Naive thymus-derived CD4-positive, alpha-beta T cell (primary cell): ENCODE measurements at regions of chr4 and their contacts with region 1.

Region 1: GRCh38 chr4:75724066-75724866 is at the start of gene USO1:
- DNase-seq: peak; percentile 98 to 100 (median 99)
- ATAC-seq: peak; percentile 98
- H3K4me3 ChIP-seq: peak within 1 kb of the TSS; percentile 87
- H3K4me3 Mint-ChIP-seq: peak within 1 kb of the TSS; percentile 93 to 100 (median 100)
- H3K27ac ChIP-seq: peak within 1 kb of the TSS; percentile 91
- H3K27ac Mint-ChIP-seq: peak within 1 kb of the TSS; percentile 97 to 100 (median 99)
- H3K4me1 ChIP-seq: peaks cover 25 to 30% of the 10 kb centered on the region in 2 donors
- H3K4me1 Mint-ChIP-seq: peaks cover 32 to 60% (median 59%) of the 10 kb centered on the region in 7 donors
- H3K27me3 ChIP-seq: no peaks in the 10 kb centered on the region
- H3K27me3 Mint-ChIP-seq: peaks cover 0 to 4% (median 0%) of the 10 kb centered on the region in 5 donors
- total RNA-seq, gene USO1: 17.8 to 54.8 (median 35.0) TPM

Region 2: DNA sequence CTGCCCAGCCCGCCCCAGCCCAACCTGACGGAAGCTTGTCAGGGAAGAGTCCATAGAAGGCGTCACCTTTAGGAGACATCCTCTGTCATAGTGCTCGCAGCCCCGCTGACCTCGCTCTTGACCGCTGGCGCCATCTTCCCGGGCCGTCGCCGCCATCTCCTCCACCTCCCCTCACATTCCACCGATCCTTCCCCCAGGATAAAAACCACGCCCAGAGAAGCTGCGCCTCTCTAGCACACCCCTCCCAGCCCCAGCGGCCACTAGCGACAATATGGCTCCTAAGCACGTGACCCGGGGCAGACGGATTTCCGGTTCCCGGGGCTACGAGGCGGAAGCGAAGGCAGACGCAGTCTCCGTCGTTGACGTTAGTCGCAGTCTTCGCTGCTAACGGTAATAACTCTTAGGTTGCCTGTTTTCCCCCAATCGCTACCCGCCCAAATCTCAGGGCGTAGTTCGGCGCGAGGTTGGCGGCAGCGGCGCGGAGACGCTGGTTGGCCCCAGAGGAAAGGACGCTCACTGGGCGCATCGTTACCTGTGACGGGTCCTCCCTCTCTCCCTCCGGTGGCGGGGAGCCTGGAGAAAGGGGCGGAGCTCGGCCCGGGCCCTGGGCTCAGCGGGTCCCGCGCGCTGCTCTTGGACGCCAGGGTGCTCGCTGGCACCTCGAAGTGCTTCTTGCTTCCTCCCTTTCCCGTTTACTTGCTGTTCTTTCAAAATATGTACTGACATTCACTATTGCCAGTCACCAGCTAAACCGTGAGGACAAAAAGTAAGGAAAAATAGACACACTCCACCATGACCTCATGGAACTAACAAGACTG is 209.9 kb before region 1 on chr4 and contains the starts of genes RCHY1 and THAP6:
- CTCF ChIA-PET with region 1: interaction called, 5 read pairs
- POLR2A ChIA-PET with region 1: interaction called, 27 read pairs
- intact Hi-C with region 1: loop called (anchors 1 kb)
- DNase-seq: peak; percentile 82 to 95 (median 93)
- ATAC-seq: peak; percentile 92
- H3K4me3 ChIP-seq: peak within 1 kb of the TSS; percentile 79
- H3K4me3 Mint-ChIP-seq: peak within 1 kb of the TSS in 1 of 10 donors; percentile 97
- H3K27ac ChIP-seq: peak within 1 kb of the TSS; percentile 98
- H3K27ac Mint-ChIP-seq: peak within 1 kb of the TSS in 7 of 9 donors; percentile 96 to 100 (median 98)
- H3K4me1 ChIP-seq: peaks cover 53 to 56% of the 10 kb centered on the region in 2 donors
- H3K4me1 Mint-ChIP-seq: peaks cover 30 to 63% (median 49%) of the 10 kb centered on the region in 7 donors
- H3K27me3 ChIP-seq: no peaks in the 10 kb centered on the region
- H3K27me3 Mint-ChIP-seq: no peaks in the 10 kb centered on the region
- total RNA-seq, gene RCHY1: 23.0 to 37.8 (median 29.6) TPM
- total RNA-seq, gene THAP6: 18.2 to 43.9 (median 25.1) TPM

Region 3: DNA sequence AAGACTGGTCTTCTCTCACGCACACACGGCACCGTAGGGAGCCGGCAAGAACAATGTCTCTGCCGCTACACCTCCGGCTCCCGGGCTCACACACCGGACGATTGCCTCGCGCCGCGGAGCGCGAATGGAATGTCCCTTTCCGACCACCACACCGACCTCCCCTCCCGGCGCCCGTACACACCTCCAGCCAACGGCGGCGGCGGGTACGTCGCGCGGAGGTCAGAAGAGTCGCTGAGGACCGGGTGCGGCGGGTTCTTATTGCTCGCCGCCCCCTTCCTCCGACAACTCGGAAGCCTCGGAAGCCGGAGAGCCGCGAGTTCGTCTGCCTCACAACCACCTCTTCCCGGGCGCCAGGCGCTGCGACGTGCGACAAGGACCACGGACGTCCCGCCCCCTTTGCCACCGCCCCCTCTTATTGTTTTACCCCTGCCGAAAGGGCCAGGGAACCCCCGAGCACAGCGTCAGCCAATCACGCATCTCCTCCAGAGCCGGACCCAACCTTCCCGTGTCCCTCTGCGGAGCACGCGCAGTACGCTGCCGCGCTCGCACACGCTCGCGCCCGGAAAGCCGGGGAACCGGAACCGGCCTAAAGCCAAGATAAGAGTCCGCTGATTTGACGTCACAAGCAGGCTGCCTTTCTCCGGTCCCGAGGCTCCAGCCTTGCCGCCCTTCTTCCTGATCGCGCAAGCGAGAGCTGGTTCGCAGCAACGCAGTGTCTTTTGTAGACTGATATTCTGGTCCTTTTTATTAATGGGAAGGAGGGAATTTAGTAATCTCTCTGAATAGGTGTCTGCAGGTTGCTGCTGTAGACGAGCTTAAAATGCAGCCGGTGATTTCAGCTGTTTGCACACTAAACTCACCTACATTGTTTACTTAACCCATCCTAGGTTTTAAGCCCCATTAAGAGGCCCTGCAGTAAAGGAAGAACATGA is 51.0 kb before region 1 on chr4 and contains the start of gene G3BP2:
- CTCF ChIA-PET with region 1: interaction called, 11 read pairs
- POLR2A ChIA-PET with region 1: interaction called, 148 read pairs
- intact Hi-C with region 1: loop called (anchors 1 kb)
- DNase-seq: peak; percentile 87 to 99 (median 97)
- ATAC-seq: peak; percentile 97
- H3K4me3 ChIP-seq: peak within 1 kb of the TSS; percentile 91
- H3K4me3 Mint-ChIP-seq: peak within 1 kb of the TSS; percentile 96 to 100 (median 98)
- H3K27ac ChIP-seq: peak within 1 kb of the TSS; percentile 96
- H3K27ac Mint-ChIP-seq: peak within 1 kb of the TSS; percentile 92 to 100 (median 99)
- H3K4me1 ChIP-seq: peaks cover 38 to 43% of the 10 kb centered on the region in 2 donors
- H3K4me1 Mint-ChIP-seq: peaks cover 36 to 47% (median 44%) of the 10 kb centered on the region in 7 donors
- H3K27me3 ChIP-seq: no peaks in the 10 kb centered on the region
- H3K27me3 Mint-ChIP-seq: no peaks in the 10 kb centered on the region
- total RNA-seq, gene G3BP2: 161 to 299 (median 167) TPM

Region 4: GRCh38 chr4:75708218-75708691 is 16.0 kb before region 1 on chr4:
- CTCF ChIA-PET with region 1: interaction called, 12 read pairs
- POLR2A ChIA-PET with region 1: interaction called, 13 read pairs
- intact Hi-C with region 1: loop called in 1 of 2 experiments (anchors 2 kb)
- DNase-seq: peak in 7 of 9 donors; percentile 49 to 72 (median 52)
- ATAC-seq: peak; percentile 93
- H3K4me3 ChIP-seq: no peak overlapping the region
- H3K4me3 Mint-ChIP-seq: no peak overlapping the region
- H3K27ac ChIP-seq: no peak overlapping the region
- H3K27ac Mint-ChIP-seq: peak overlapping the region in 7 of 9 donors; percentile 19 to 81 (median 56)
- H3K4me1 ChIP-seq: no peaks in the 10 kb centered on the region
- H3K4me1 Mint-ChIP-seq: peaks cover 0 to 13% (median 5%) of the 10 kb centered on the region in 7 donors
- H3K27me3 ChIP-seq: no peaks in the 10 kb centered on the region
- H3K27me3 Mint-ChIP-seq: no peaks in the 10 kb centered on the region

Region 5: GRCh38 chr4:75940692-75941253 is 216.5 kb after region 1 on chr4 and contains the start of gene NAAA:
- CTCF ChIA-PET with region 1: no interaction called
- POLR2A ChIA-PET with region 1: interaction called, 16 read pairs
- intact Hi-C with region 1: loop called (anchors 1 kb)
- DNase-seq: peak; percentile 57 to 87 (median 75)
- ATAC-seq: peak; percentile 92
- H3K4me3 ChIP-seq: peak within 1 kb of the TSS; percentile 100
- H3K4me3 Mint-ChIP-seq: peak within 1 kb of the TSS; percentile 96 to 99 (median 98)
- H3K27ac ChIP-seq: peak within 1 kb of the TSS; percentile 80
- H3K27ac Mint-ChIP-seq: peak within 1 kb of the TSS; percentile 90 to 98 (median 94)
- H3K4me1 ChIP-seq: peaks cover 9 to 12% of the 10 kb centered on the region in 2 donors
- H3K4me1 Mint-ChIP-seq: peaks cover 12 to 34% (median 22%) of the 10 kb centered on the region in 7 donors
- H3K27me3 ChIP-seq: no peaks in the 10 kb centered on the region
- H3K27me3 Mint-ChIP-seq: no peaks in the 10 kb centered on the region
- total RNA-seq, gene NAAA: 36.9 to 103 (median 80.3) TPM

Region 6: DNA sequence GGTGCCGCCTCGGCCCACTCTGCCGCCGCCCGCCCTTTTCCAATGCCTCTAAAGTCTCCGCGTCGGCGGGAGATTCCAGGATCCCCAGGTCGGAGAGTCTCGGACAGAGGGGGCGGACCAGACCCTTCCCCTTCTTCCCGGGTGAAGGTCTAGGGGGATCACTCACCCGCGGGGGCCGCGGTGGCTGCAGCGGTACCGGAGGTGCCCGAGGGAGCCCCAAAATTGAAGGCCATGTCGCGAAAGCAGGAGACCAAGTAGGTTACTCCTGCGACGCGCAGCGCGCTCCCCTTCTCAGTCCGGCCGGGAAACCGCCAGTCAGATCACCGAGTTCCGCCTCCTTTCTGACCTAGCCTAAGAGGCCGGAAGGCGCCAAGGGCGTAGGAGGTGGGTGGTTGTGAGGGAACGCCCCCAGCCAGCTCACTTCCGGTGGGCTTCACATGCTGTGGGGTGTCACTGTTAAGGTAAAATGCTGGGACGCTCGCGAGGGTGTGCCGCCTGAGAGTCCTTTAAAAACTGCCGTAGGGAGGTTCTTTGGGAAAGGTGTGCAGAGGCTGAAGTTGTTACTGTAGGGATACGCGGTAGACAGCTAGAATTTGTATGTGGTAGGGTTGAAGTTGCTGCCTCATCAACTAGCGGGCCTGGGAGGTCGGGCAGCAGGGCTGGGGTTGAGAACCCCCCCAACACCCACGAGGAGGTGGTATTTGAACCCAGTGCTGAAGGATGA is 424.0 kb after region 1 on chr4 and contains the start of gene NUP54:
- CTCF ChIA-PET with region 1: no interaction called
- POLR2A ChIA-PET with region 1: interaction called, 5 read pairs
- intact Hi-C with region 1: loop called (anchors 1 kb)
- DNase-seq: peak; percentile 85 to 96 (median 92)
- ATAC-seq: peak; percentile 99
- H3K4me3 ChIP-seq: peak within 1 kb of the TSS; percentile 85
- H3K4me3 Mint-ChIP-seq: peak within 1 kb of the TSS; percentile 90 to 100 (median 96)
- H3K27ac ChIP-seq: peak within 1 kb of the TSS; percentile 93
- H3K27ac Mint-ChIP-seq: peak within 1 kb of the TSS; percentile 91 to 99 (median 94)
- H3K4me1 ChIP-seq: peaks cover 12% of the 10 kb centered on the region in 2 donors
- H3K4me1 Mint-ChIP-seq: peaks cover 21 to 52% (median 45%) of the 10 kb centered on the region in 7 donors
- H3K27me3 ChIP-seq: no peaks in the 10 kb centered on the region
- H3K27me3 Mint-ChIP-seq: no peaks in the 10 kb centered on the region
- total RNA-seq, gene NUP54: 51.1 to 82.0 (median 65.5) TPM